Thyroid gland (tissue), 4 donors: ENCODE measurements at regions of chr4 and their contacts with region 1.

Region 1: GRCh38 chr4:37891260-37892159 is 626 bp downstream of the TBC1D1 start:
- DNase-seq: peak; percentile 64 to 65
- H3K4me3 ChIP-seq: peak overlapping the region; percentile 27 to 94 (median 77)
- H3K27ac ChIP-seq: peak overlapping the region; percentile 75 to 89 (median 78)
- H3K4me1 ChIP-seq: peaks cover 0 to 9% of the 10 kb centered on the region in 2 donors
- H3K27me3 ChIP-seq: no peaks in the 10 kb centered on the region
- CTCF ChIP-seq: no peak
- POLR2A ChIP-seq: peak in 1 of 2 donors; percentile 22

Region 2: GRCh38 chr4:37964734-37965457 is 73.4 kb after region 1 on chr4:
- intact Hi-C with region 1: loop called (anchors 10 kb)
- DNase-seq: no peak
- H3K4me3 ChIP-seq: no peak overlapping the region
- H3K27ac ChIP-seq: no peak overlapping the region
- H3K4me1 ChIP-seq: peaks cover 19 to 34% of the 10 kb centered on the region in 2 donors
- H3K27me3 ChIP-seq: no peaks in the 10 kb centered on the region
- CTCF ChIP-seq: no peak
- POLR2A ChIP-seq: no peak